Activated CD8-positive, alpha-beta T cell treated with anti-CD3 and anti-CD28 coated beads, Interleukin-2, amount 10 ng/mL, durations not matched to agents 7 days and 5 days (primary cell): ENCODE measurements at regions of chr7 and their contacts with region 1.

Region 1: GRCh38 chr7:30740424-30741181 is 11.3 kb upstream of the INMT start:
- DNase-seq: peak; percentile 82
- ATAC-seq: peak; percentile 71
- H3K4me3 Mint-ChIP-seq: no peak overlapping the region
- H3K27ac Mint-ChIP-seq: no peak overlapping the region
- H3K4me1 Mint-ChIP-seq: peaks cover 31% of the 10 kb centered on the region
- H3K27me3 Mint-ChIP-seq: no peaks in the 10 kb centered on the region

Region 2: GRCh38 chr7:30276203-30276900 is 464.3 kb before region 1 on chr7:
- CTCF ChIA-PET with region 1: interaction called, 10 read pairs
- POLR2A ChIA-PET with region 1: no interaction called
- DNase-seq: peak; percentile 65
- ATAC-seq: peak; percentile 73
- H3K4me3 Mint-ChIP-seq: no peak overlapping the region
- H3K27ac Mint-ChIP-seq: no peak overlapping the region
- H3K4me1 Mint-ChIP-seq: peaks cover 6% of the 10 kb centered on the region
- H3K27me3 Mint-ChIP-seq: no peaks in the 10 kb centered on the region

Region 3: GRCh38 chr7:30594549-30595435 is 145.8 kb before region 1 on chr7 and contains the start of gene GARS1:
- CTCF ChIA-PET with region 1: interaction called, 10 read pairs
- POLR2A ChIA-PET with region 1: interaction called, 6 read pairs
- DNase-seq: peak; percentile 92
- ATAC-seq: peak; percentile 89
- H3K4me3 Mint-ChIP-seq: peak within 1 kb of the TSS; percentile 90
- H3K27ac Mint-ChIP-seq: peak within 1 kb of the TSS; percentile 99
- H3K4me1 Mint-ChIP-seq: peaks cover 51% of the 10 kb centered on the region
- H3K27me3 Mint-ChIP-seq: no peaks in the 10 kb centered on the region
- total RNA-seq, gene GARS1: 185 to 189 TPM

Region 4: DNA sequence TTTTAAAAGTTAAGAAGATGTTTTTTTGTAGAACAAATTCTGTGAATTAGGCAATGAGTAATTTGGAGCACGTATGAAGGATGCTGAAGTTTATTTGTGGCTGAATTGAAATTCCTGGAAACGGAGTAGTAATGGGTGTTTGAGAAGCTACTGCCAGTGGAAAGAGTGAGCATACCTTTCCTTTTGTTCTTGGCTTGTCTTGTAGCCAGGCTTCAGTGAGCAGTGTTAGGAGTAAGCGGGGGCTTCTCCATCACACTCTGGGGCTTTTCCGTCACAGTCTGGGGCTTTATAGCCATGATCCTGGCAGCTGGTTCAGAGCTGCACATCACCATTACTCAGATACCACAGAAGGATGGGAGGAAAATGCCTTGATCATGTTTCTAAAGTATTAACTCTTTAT is 113.6 kb before region 1 on chr7:
- CTCF ChIA-PET with region 1: interaction called, 10 read pairs
- POLR2A ChIA-PET with region 1: no interaction called
- DNase-seq: no peak
- ATAC-seq: no peak
- H3K4me3 Mint-ChIP-seq: no peak overlapping the region
- H3K27ac Mint-ChIP-seq: no peak overlapping the region
- H3K4me1 Mint-ChIP-seq: peaks cover 12% of the 10 kb centered on the region
- H3K27me3 Mint-ChIP-seq: no peaks in the 10 kb centered on the region

Region 5: DNA sequence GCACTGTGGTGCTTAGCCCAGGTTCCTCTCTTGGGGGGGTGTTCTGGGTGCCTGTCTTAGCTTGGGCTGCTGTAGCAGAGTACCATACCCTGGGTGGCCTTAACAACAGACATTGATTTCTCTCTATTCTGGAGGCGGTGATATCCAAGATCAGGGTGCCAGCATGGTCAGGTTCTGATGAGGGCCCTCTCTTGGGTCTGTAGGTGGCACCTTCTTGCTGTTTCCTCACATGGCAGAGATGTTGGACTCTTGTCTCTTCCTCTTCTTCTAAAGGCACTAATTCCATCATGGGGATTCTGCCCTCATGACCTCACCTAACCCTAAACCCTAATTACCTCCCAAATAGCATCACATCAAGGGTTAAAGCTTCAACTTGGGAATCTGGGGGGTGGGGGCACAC is 38.4 kb before region 1 on chr7:
- CTCF ChIA-PET with region 1: interaction called, 79 read pairs
- POLR2A ChIA-PET with region 1: interaction called, 6 read pairs
- DNase-seq: peak; percentile 35
- ATAC-seq: peak; percentile 45
- H3K4me3 Mint-ChIP-seq: no peak overlapping the region
- H3K27ac Mint-ChIP-seq: no peak overlapping the region
- H3K4me1 Mint-ChIP-seq: peaks cover 6% of the 10 kb centered on the region
- H3K27me3 Mint-ChIP-seq: no peaks in the 10 kb centered on the region

Region 6: GRCh38 chr7:30727061-30727945 is 13.3 kb before region 1 on chr7:
- CTCF ChIA-PET with region 1: interaction called, 118 read pairs
- POLR2A ChIA-PET with region 1: interaction called, 12 read pairs
- DNase-seq: peak; percentile 85
- ATAC-seq: peak; percentile 89
- H3K4me3 Mint-ChIP-seq: peak overlapping the region; percentile 92
- H3K27ac Mint-ChIP-seq: peak overlapping the region; percentile 99
- H3K4me1 Mint-ChIP-seq: peaks cover 70% of the 10 kb centered on the region
- H3K27me3 Mint-ChIP-seq: no peaks in the 10 kb centered on the region

Region 7: GRCh38 chr7:30757342-30757692 is 16.7 kb after region 1 on chr7:
- CTCF ChIA-PET with region 1: interaction called, 14 read pairs
- POLR2A ChIA-PET with region 1: no interaction called
- DNase-seq: no peak
- ATAC-seq: no peak
- H3K4me3 Mint-ChIP-seq: no peak overlapping the region
- H3K27ac Mint-ChIP-seq: no peak overlapping the region
- H3K4me1 Mint-ChIP-seq: no peaks in the 10 kb centered on the region
- H3K27me3 Mint-ChIP-seq: peaks cover 11% of the 10 kb centered on the region

Region 8: GRCh38 chr7:30842542-30843451 is 102.2 kb after region 1 on chr7:
- CTCF ChIA-PET with region 1: no interaction called
- POLR2A ChIA-PET with region 1: no interaction called
- DNase-seq: no peak
- ATAC-seq: no peak
- H3K4me3 Mint-ChIP-seq: no peak overlapping the region
- H3K27ac Mint-ChIP-seq: no peak overlapping the region
- H3K4me1 Mint-ChIP-seq: no peaks in the 10 kb centered on the region
- H3K27me3 Mint-ChIP-seq: no peaks in the 10 kb centered on the region

Region 9: GRCh38 chr7:31043051-31043471 is 302.5 kb after region 1 on chr7:
- CTCF ChIA-PET with region 1: no interaction called
- POLR2A ChIA-PET with region 1: no interaction called
- DNase-seq: no peak
- ATAC-seq: no peak
- H3K4me3 Mint-ChIP-seq: no peak overlapping the region
- H3K27ac Mint-ChIP-seq: no peak overlapping the region
- H3K4me1 Mint-ChIP-seq: no peaks in the 10 kb centered on the region
- H3K27me3 Mint-ChIP-seq: peaks cover 43% of the 10 kb centered on the region